SK-N-SH (cell line): ENCODE measurements at regions of chr17 and their contacts with region 1.

Region 1: GRCh38 chr17:50649042-50649904 is 14.6 kb downstream of the ABCC3 start:
- DNase-seq: no peak
- H3K4me3 ChIP-seq: no peak overlapping the region
- H3K27ac ChIP-seq: no peak overlapping the region
- H3K4me1 ChIP-seq: no peaks in the 10 kb centered on the region
- H3K27me3 ChIP-seq: no peaks in the 10 kb centered on the region
- CTCF ChIP-seq: no peak
- EP300 ChIP-seq: no peak
- RAD21 ChIP-seq: no peak

Region 2: DNA sequence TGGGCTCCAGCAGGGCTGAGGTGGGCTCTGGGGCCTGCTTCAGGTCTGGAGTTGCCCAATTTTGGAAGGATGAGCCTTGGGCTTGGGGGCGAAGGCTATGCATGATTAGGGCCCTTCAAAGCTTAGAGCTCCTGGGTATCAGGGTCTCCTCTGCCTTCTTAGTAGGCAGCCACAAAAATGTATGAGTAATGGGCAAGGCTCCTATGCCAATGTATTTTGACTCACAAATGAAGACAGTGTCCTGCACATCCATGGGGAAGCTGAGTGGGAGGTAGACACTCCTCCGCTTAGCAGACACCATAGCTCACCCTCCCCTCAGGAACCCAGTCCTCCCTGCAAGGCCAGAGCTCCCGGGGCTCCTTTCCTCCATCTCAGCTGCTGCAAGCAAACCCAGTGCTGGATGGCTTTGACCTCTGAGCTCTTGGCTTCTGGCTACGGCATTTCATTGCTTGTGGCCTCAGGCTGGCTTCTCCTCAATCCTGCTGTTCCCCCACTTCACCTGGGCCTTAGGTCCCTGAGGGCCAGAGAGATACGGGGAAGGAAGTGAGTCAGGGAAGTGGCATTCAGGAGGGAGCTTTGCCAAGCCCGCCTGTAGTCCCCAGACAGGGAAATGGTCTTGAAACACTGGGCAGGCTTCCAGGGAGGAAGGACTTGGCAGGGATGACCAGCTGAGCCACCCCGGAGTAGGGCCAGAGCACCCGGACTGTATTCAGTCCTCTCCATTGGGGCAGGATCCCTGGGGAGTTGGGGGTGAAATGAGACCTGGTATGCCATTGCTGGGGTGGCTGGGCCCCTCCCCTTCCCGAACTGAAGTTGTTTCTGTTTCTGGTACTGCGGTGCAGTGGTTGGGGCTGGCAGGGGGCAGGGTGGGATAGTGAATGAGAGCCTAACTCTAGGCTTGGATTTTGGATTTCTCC is 10.2 kb before region 1 on chr17:
- CTCF ChIA-PET with region 1: interaction called, 18 read pairs
- POLR2A ChIA-PET with region 1: no interaction called
- DNase-seq: peak; percentile 81
- H3K4me3 ChIP-seq: peak overlapping the region; percentile 4 to 43; a peak in 3 of 4 replicates
- H3K27ac ChIP-seq: peak overlapping the region; percentile 88 to 97
- H3K4me1 ChIP-seq: peaks cover 41 to 60% of the 10 kb centered on the region in 2 experiments; a peak in 3 of 4 replicates
- H3K27me3 ChIP-seq: no peaks in the 10 kb centered on the region
- CTCF ChIP-seq: no peak
- EP300 ChIP-seq: peak; percentile 65 to 94
- RAD21 ChIP-seq: peak; percentile 12; the same call in 1 of the 2 replicates

Region 3: DNA sequence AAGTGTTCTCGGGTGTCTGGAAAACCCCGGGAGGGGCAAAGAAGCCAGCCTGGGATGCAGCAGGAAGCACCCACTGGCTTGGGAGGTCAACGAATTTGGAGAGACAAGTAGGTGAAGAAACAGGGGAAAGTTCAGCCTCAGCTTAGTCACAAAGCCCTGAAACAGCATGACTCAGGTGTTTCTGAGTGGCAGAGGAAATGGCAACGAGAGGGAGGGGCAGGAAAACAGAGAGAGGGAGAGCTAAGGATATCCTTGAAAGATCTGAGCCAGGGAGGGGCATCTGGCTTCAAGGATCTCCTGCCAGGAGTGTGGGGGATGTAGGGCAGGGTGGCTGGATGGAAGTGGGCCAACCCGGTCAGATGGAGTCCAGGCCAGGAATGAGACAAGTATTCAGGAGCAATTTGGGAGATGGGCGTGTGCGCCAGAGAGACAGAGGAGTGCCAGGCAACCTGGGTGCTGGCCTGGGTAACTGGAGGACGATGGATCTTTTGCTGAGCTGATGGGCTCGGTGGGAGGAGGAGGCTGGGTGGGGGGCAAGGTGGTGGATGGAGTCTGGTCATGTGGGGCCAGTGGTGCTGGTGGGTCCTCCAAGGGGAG is 12.6 kb after region 1 on chr17:
- CTCF ChIA-PET with region 1: interaction called, 10 read pairs
- POLR2A ChIA-PET with region 1: no interaction called
- DNase-seq: peak; percentile 73
- H3K4me3 ChIP-seq: no peak overlapping the region
- H3K27ac ChIP-seq: peak overlapping the region; percentile 77
- H3K4me1 ChIP-seq: peaks cover 39 to 44% of the 10 kb centered on the region in 2 experiments
- H3K27me3 ChIP-seq: no peaks in the 10 kb centered on the region
- CTCF ChIP-seq: no peak
- EP300 ChIP-seq: peak; percentile 40 to 93; a peak in 1 of 4 replicates
- RAD21 ChIP-seq: no peak